Heart right ventricle (tissue), 16 donors: ENCODE measurements at regions of chr6 and their contacts with region 1.

Region 1: DNA sequence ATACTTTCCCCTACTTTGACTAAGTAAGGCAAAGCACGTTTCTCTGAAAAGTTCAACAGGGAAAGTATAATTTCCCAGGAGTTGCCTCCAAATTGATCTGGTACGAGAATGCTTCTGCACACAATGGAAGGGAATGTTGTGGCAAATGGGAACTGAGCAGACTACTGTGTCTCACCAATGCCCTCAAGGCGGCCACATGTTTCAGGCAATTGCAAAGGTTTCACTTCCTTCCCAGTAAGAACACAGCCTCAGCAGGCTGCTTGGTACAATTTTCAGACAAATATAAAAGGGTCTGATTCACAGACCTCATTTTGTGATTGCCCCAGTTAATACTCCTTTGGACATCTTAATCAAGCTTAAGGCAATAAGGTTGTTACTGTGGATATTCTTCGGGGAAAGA is 71.2 kb downstream of the KIAA0319 start:
- DNase-seq: no peak
- ATAC-seq: no peak
- H3K4me3 ChIP-seq: no peak overlapping the region
- H3K27ac ChIP-seq: no peak overlapping the region
- H3K4me1 ChIP-seq: no peaks in the 10 kb centered on the region
- H3K27me3 ChIP-seq: peaks cover 0 to 30% (median 4%) of the 10 kb centered on the region in 7 donors
- CTCF ChIP-seq: no peak

Region 2: GRCh38 chr6:24643925-24644324 is 69.1 kb after region 1 on chr6:
- intact Hi-C with region 1: no loop called
- DNase-seq: no peak
- ATAC-seq: no peak
- H3K4me3 ChIP-seq: no peak overlapping the region
- H3K27ac ChIP-seq: no peak overlapping the region
- H3K4me1 ChIP-seq: peaks cover 0 to 10% (median 5%) of the 10 kb centered on the region in 9 donors
- H3K27me3 ChIP-seq: peaks cover 0 to 44% (median 21%) of the 10 kb centered on the region in 7 donors
- CTCF ChIP-seq: no peak

Region 3: GRCh38 chr6:24667378-24667803 is 92.6 kb after region 1 on chr6:
- intact Hi-C with region 1: no loop called
- DNase-seq: peak in 1 of 2 donors; percentile 10
- ATAC-seq: peak in 3 of 8 donors; percentile 2 to 16 (median 15)
- H3K4me3 ChIP-seq: peak overlapping the region; percentile 59 to 99 (median 89)
- H3K27ac ChIP-seq: peak overlapping the region; percentile 63 to 96 (median 92)
- H3K4me1 ChIP-seq: peaks cover 3 to 43% (median 28%) of the 10 kb centered on the region in 9 donors
- H3K27me3 ChIP-seq: no peaks in the 10 kb centered on the region
- CTCF ChIP-seq: no peak

Region 4: GRCh38 chr6:24761193-24761835 is 186.5 kb after region 1 on chr6:
- intact Hi-C with region 1: loop called in 7 of 10 experiments (anchors 5 to 10 kb)
- DNase-seq: no peak
- ATAC-seq: peak in 1 of 8 donors; percentile 31
- H3K4me3 ChIP-seq: no peak overlapping the region
- H3K27ac ChIP-seq: no peak overlapping the region
- H3K4me1 ChIP-seq: peaks cover 0 to 13% (median 0%) of the 10 kb centered on the region in 9 donors
- H3K27me3 ChIP-seq: no peaks in the 10 kb centered on the region
- CTCF ChIP-seq: no peak

Region 5: DNA sequence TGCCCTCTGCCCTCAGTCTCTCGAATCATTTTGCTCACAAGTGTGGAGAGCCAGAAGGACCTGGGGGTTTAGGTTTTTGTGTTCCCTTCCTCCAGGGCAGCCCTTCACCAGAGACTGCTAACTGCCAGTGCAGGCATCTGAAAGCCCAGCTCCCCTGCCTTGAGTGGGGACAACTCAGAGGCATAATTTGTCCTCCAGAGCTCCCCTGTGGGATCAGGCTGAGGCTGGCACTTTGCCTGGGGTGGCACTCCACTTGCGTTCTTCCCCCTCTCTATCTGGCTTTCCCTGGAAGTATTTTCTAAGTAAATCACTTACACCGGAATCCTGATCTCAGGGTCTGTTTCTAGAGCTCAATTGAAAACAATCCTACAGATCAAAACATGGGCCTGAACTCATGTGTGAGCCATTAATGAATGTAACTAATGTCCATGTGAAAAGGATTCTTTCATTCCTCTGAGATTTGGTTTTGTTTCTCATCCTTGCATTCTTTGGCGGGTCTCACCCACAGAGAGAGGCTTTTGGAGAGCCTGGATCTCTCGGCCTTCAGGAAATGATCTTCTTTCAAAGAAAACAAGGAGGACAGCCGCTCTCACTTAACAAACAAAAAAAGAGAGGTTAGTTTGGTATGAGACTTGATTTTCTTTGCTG is 486.6 kb after region 1 on chr6:
- intact Hi-C with region 1: loop called in 1 of 10 experiments (anchors 10 kb)
- DNase-seq: peak in 1 of 2 donors; percentile 18
- ATAC-seq: peak in 2 of 8 donors; percentile 11 to 15
- H3K4me3 ChIP-seq: no peak overlapping the region
- H3K27ac ChIP-seq: peak overlapping the region in 2 of 10 donors; percentile 3 to 37
- H3K4me1 ChIP-seq: peaks cover 0 to 24% (median 0%) of the 10 kb centered on the region in 9 donors
- H3K27me3 ChIP-seq: no peaks in the 10 kb centered on the region
- CTCF ChIP-seq: no peak